MCF 10A (cell line): ENCODE measurements at regions of chr7 and their contacts with region 1.

Region 1: DNA sequence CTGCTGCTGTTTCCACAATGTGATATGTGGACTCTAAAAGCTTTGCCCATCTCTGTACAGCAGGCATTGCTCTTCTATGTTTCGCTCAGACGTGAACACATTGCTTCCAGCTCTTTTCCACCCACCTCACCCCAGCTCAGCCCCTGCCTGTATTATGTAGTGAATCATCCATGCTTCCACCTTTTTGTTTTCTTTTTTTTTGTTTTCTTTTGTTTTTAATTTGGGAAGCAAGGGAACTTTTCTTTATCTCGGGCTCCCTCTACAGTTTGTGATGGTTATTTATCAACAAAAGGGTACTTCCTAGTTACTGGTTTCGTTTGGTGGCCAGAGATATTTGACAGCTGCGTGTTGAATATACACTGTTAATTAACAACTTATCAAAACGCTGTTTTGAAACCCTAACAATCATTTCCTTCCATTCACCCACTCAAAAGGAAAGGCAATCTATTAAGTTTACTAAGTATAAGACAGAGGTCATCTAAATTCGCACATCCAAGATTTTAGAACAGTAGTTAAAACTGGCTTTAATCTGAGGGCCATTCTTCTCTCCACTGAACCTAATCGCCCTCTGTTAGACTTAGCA is 127.9 kb upstream of the STK17A start:
- DNase-seq: peak; percentile 71
- H3K4me3 Mint-ChIP-seq: no peak overlapping the region
- H3K27ac Mint-ChIP-seq: no peak overlapping the region
- H3K4me1 Mint-ChIP-seq: peaks cover 6% of the 10 kb centered on the region
- H3K27me3 Mint-ChIP-seq: no peaks in the 10 kb centered on the region
- CTCF ChIP-seq: peak; percentile 48

Region 2: GRCh38 chr7:43439631-43440401 is 15.2 kb before region 1 on chr7:
- CTCF ChIA-PET with region 1: interaction called, 65 read pairs
- POLR2A ChIA-PET with region 1: interaction called, 4 read pairs
- intact Hi-C with region 1: no loop called
- DNase-seq: peak; percentile 64
- H3K4me3 Mint-ChIP-seq: no peak overlapping the region
- H3K27ac Mint-ChIP-seq: no peak overlapping the region
- H3K4me1 Mint-ChIP-seq: no peaks in the 10 kb centered on the region
- H3K27me3 Mint-ChIP-seq: no peaks in the 10 kb centered on the region
- CTCF ChIP-seq: peak; percentile 90